CD14-positive monocyte (primary cell): ENCODE measurements at regions of chr16 and their contacts with region 1.

Region 1: GRCh38 chr16:19502395-19503131 is 19.3 kb downstream of the GDE1 start:
- DNase-seq: peak; percentile 60 to 66 (median 65)
- H3K4me3 ChIP-seq: no peak overlapping the region
- H3K4me3 Mint-ChIP-seq: no peak overlapping the region
- H3K27ac ChIP-seq: no peak overlapping the region
- H3K27ac Mint-ChIP-seq: no peak overlapping the region
- H3K4me1 ChIP-seq: peaks cover 6% of the 10 kb centered on the region in 2 donors
- H3K4me1 Mint-ChIP-seq: peaks cover 5% of the 10 kb centered on the region
- H3K27me3 ChIP-seq: no peaks in the 10 kb centered on the region
- H3K27me3 Mint-ChIP-seq: peaks cover 0 to 2% (median 0%) of the 10 kb centered on the region in 3 donors
- CTCF ChIP-seq: peak; percentile 84

Region 2: GRCh38 chr16:19167710-19168370 is 334.7 kb before region 1 on chr16 and contains the start of gene SYT17:
- intact Hi-C with region 1: loop called in 1 of 2 experiments (anchors 5 kb)
- DNase-seq: peak; percentile 71 to 79 (median 76)
- H3K4me3 ChIP-seq: peak within 1 kb of the TSS; percentile 30 to 76 (median 46)
- H3K4me3 Mint-ChIP-seq: peak within 1 kb of the TSS; percentile 77 to 86
- H3K27ac ChIP-seq: no peak within 1 kb of the TSS
- H3K27ac Mint-ChIP-seq: no peak within 1 kb of the TSS
- H3K4me1 ChIP-seq: peaks cover 20 to 30% of the 10 kb centered on the region in 2 donors
- H3K4me1 Mint-ChIP-seq: peaks cover 19% of the 10 kb centered on the region
- H3K27me3 ChIP-seq: peaks cover 18 to 38% of the 10 kb centered on the region in 2 donors
- H3K27me3 Mint-ChIP-seq: peaks cover 36 to 50% (median 48%) of the 10 kb centered on the region in 3 donors
- CTCF ChIP-seq: peak; percentile 92
- polyA plus RNA-seq, gene SYT17: 0.81 to 4.9 (median 1.1) TPM

Region 3: GRCh38 chr16:19338335-19338734 is 164.2 kb before region 1 on chr16:
- intact Hi-C with region 1: no loop called
- DNase-seq: no peak
- H3K4me3 ChIP-seq: no peak overlapping the region
- H3K4me3 Mint-ChIP-seq: no peak overlapping the region
- H3K27ac ChIP-seq: no peak overlapping the region
- H3K27ac Mint-ChIP-seq: no peak overlapping the region
- H3K4me1 ChIP-seq: no peaks in the 10 kb centered on the region
- H3K4me1 Mint-ChIP-seq: no peaks in the 10 kb centered on the region
- H3K27me3 ChIP-seq: no peaks in the 10 kb centered on the region
- H3K27me3 Mint-ChIP-seq: peaks cover 2 to 7% (median 6%) of the 10 kb centered on the region in 3 donors
- CTCF ChIP-seq: no peak

Region 4: GRCh38 chr16:19389246-19389645 is 113.3 kb before region 1 on chr16:
- intact Hi-C with region 1: loop called in 1 of 2 experiments (anchors 10 kb)
- DNase-seq: peak; percentile 5 to 27 (median 12)
- H3K4me3 ChIP-seq: no peak overlapping the region
- H3K4me3 Mint-ChIP-seq: no peak overlapping the region
- H3K27ac ChIP-seq: no peak overlapping the region
- H3K27ac Mint-ChIP-seq: no peak overlapping the region
- H3K4me1 ChIP-seq: no peaks in the 10 kb centered on the region
- H3K4me1 Mint-ChIP-seq: no peaks in the 10 kb centered on the region
- H3K27me3 ChIP-seq: peaks cover 0 to 2% of the 10 kb centered on the region in 2 donors
- H3K27me3 Mint-ChIP-seq: peaks cover 5 to 22% (median 13%) of the 10 kb centered on the region in 3 donors
- CTCF ChIP-seq: peak; percentile 37